Naive thymus-derived CD4-positive, alpha-beta T cell (primary cell): ENCODE measurements at regions of chr4 and their contacts with region 1.

Region 1: DNA sequence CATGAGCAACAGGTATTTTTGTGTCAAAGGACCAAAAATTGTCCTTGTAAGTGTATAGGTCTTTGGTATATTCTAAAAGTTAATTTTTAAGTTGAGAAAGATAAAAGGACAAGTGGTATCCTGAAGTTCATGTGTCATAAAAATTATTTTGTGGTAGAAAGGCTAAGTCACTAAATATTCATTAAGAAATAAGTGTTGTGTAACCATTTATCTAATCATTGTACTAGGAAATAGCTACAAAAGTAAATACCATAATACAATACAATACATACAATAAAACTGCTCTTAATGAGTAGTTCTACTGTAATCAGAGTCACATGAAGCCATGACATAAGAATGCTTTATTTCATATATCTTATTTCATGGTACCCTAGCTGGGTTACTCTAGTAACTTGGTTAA is 82.5 kb upstream of the ATOH1 start:
- DNase-seq: no peak
- ATAC-seq: no peak
- H3K4me3 ChIP-seq: no peak overlapping the region
- H3K4me3 Mint-ChIP-seq: no peak overlapping the region
- H3K27ac ChIP-seq: no peak overlapping the region
- H3K27ac Mint-ChIP-seq: no peak overlapping the region
- H3K4me1 ChIP-seq: no peaks in the 10 kb centered on the region
- H3K4me1 Mint-ChIP-seq: no peaks in the 10 kb centered on the region
- H3K27me3 ChIP-seq: no peaks in the 10 kb centered on the region
- H3K27me3 Mint-ChIP-seq: no peaks in the 10 kb centered on the region

Region 2: GRCh38 chr4:93578942-93579341 is 167.1 kb before region 1 on chr4:
- CTCF ChIA-PET with region 1: no interaction called
- POLR2A ChIA-PET with region 1: no interaction called
- intact Hi-C with region 1: no loop called
- DNase-seq: no peak
- ATAC-seq: no peak
- H3K4me3 ChIP-seq: no peak overlapping the region
- H3K4me3 Mint-ChIP-seq: no peak overlapping the region
- H3K27ac ChIP-seq: no peak overlapping the region
- H3K27ac Mint-ChIP-seq: no peak overlapping the region
- H3K4me1 ChIP-seq: no peaks in the 10 kb centered on the region
- H3K4me1 Mint-ChIP-seq: no peaks in the 10 kb centered on the region
- H3K27me3 ChIP-seq: no peaks in the 10 kb centered on the region
- H3K27me3 Mint-ChIP-seq: no peaks in the 10 kb centered on the region

Region 3: GRCh38 chr4:93670434-93670833 is 75.6 kb before region 1 on chr4:
- CTCF ChIA-PET with region 1: no interaction called
- POLR2A ChIA-PET with region 1: no interaction called
- intact Hi-C with region 1: no loop called
- DNase-seq: no peak
- ATAC-seq: no peak
- H3K4me3 ChIP-seq: no peak overlapping the region
- H3K4me3 Mint-ChIP-seq: no peak overlapping the region
- H3K27ac ChIP-seq: no peak overlapping the region
- H3K27ac Mint-ChIP-seq: no peak overlapping the region
- H3K4me1 ChIP-seq: no peaks in the 10 kb centered on the region
- H3K4me1 Mint-ChIP-seq: no peaks in the 10 kb centered on the region
- H3K27me3 ChIP-seq: no peaks in the 10 kb centered on the region
- H3K27me3 Mint-ChIP-seq: no peaks in the 10 kb centered on the region

Region 4: DNA sequence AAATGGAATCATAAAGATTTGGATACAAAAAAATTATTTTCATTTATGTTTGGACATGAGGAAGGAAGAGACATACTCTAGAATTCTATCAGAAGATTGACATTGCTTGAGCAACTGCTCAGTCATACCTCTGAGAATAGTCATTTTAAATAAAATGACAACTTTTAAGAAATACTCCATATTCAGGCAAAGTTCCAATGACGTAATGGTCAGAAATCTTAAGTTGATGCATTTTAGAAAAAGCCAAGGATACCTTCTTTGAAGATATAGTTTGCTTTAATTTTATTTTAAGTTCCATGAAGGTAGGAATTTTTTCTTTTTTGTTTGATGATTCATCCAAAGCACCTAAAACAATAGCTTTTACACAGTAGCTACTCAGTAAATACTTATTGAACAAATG is 27.8 kb before region 1 on chr4:
- CTCF ChIA-PET with region 1: no interaction called
- POLR2A ChIA-PET with region 1: no interaction called
- intact Hi-C with region 1: loop called in 1 of 2 experiments (anchors 1 kb)
- DNase-seq: no peak
- ATAC-seq: no peak
- H3K4me3 ChIP-seq: no peak overlapping the region
- H3K4me3 Mint-ChIP-seq: no peak overlapping the region
- H3K27ac ChIP-seq: no peak overlapping the region
- H3K27ac Mint-ChIP-seq: no peak overlapping the region
- H3K4me1 ChIP-seq: no peaks in the 10 kb centered on the region
- H3K4me1 Mint-ChIP-seq: no peaks in the 10 kb centered on the region
- H3K27me3 ChIP-seq: no peaks in the 10 kb centered on the region
- H3K27me3 Mint-ChIP-seq: no peaks in the 10 kb centered on the region